Heart right ventricle (tissue), 16 donors: ENCODE measurements at regions of chr22 and their contacts with region 1.

Region 1: DNA sequence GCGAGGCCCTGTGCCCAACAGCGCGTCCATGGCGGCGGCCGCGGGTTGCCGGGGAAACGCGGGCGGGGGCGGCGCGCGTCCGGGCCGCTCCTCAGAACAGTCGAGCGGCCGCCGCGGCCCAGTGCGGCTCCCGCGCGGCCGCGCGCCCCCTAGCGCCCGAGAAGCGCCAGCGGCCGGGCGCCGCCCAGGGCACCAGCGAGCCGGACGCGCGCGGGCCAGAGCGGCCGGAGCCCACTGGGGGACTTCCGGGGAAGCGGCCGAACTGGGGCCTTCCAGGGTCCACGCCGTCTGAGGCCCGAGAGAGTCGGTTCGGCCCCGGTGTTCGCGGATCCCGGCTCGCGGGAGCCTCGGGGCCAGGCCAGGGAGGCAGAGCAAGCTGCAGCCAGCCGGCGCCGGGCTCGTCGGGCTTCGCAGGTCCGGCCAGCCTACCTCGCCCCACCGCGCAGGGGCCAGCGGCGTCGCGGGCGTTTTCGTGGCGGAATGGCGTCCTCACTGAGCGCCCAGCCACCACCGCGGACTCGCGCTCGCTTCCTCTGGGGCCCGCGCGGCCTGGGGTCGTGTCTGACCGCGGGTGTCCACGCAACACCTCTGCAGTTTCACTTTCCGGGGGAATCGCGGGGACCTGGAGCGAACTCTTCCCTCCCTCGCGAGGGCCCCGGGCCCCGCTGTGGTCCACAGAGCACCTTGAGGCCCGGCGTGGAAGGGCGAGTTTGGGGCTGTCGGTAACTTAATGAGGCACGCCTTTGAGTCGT is at the start of gene DENND6B:
- DNase-seq: peak; percentile 73 to 85
- ATAC-seq: peak; percentile 92 to 99 (median 95)
- H3K4me3 ChIP-seq: peak within 1 kb of the TSS; percentile 44 to 98 (median 80)
- H3K27ac ChIP-seq: peak within 1 kb of the TSS; percentile 89 to 100 (median 96)
- H3K4me1 ChIP-seq: peaks cover 0 to 20% (median 14%) of the 10 kb centered on the region in 9 donors
- H3K27me3 ChIP-seq: no peaks in the 10 kb centered on the region
- CTCF ChIP-seq: peak; percentile 33 to 87 (median 59)
- total RNA-seq, gene DENND6B: 1.1 to 3.6 (median 2.0) TPM

Region 2: DNA sequence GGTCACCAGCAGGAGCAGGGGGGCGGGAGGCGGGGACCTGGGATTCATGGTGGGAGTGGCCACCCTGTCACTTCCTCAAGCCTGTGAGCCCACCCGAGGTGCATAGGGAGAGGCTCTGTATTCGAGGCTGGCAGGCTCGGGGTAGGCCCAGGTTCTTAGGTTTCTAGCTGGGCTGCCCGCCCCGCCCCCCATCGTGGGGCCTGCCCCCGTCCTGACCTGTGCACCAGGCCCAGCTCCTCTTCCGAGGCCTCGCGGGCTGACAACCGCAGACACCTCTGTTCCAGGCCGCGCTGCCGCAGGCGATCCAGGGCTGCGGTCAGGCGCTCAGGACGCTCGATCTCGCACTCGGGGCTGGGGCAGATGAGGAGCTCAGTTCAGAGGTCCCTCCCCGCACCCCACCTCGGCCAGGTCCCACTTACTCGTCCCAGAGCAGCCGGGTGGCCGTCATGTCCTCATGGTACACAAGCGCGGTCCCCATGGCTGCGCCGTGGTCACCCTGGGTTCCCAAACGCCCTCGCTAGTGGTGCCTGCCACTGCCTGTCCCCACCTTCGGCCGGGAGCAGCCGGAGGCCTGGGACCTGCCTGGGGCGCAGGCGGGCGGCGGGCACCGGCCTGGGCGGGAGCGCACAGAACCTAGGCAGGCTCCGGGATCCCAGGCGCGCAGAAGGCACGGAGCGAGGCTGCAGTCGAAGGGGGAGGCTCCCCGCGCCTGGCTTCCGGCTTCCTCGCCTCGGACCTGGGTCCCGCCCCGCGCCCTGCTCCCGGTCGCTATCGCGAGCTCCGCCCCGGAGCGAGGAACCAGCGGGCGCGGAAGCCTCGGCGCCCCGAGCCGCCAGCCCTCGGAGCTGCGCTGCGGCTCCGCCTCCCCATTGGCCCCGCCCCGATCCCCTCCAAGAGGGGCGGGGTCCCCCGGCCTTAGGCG is 76.3 kb before region 1 on chr22 and contains the start of gene HDAC10:
- intact Hi-C with region 1: loop called in 3 of 10 experiments (anchors 5 kb)
- DNase-seq: peak; percentile 69 to 85
- ATAC-seq: peak; percentile 64 to 86 (median 74)
- H3K4me3 ChIP-seq: peak within 1 kb of the TSS; percentile 52 to 94 (median 77)
- H3K27ac ChIP-seq: peak within 1 kb of the TSS; percentile 19 to 85 (median 72)
- H3K4me1 ChIP-seq: peaks cover 13 to 48% (median 33%) of the 10 kb centered on the region in 9 donors
- H3K27me3 ChIP-seq: no peaks in the 10 kb centered on the region
- CTCF ChIP-seq: no peak
- total RNA-seq, gene HDAC10: 7.1 to 16.7 (median 10.3) TPM

Region 3: DNA sequence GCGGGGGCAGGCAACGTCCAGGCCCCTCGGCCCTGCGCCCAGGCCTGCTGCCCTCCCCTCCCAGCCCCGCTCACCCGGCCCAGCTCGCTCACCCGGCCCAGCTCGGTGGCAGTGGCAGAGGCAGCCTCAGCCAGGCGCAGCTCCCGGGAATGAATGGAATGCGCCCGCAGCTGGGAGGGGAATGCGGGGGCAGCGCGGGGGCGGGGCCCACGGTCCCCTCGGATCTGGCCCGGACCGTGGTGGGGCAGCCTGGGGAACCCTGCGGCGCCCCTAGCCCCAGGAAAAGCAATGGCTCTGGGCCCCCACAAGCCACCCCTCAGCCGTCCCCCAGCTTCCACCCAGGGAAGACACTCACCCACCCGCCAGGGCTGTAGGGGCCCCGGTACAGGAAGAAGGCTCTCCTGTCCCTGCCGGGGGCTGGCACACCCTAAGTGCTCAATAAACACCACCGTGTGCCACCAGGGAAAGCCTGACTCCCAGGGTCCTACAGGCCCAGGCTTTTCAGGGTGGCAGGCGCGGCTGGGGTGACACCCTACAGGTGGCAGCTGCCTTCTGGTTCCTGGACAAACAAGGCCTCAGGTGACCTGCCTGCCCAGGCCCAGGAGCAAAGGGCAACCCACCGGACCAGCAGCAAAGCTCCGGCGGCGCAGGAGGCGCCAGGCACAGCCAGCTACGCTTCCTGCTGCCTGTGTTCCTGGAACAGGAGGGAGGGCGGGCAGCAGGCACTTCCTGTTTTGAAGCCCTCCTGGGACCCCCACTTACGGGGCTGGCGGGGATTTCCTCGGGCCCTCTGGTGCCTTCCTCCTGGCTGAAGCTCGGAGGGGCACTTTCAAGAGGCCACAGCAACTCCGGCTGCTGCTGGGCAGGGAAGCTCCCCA is 33.5 kb before region 1 on chr22:
- intact Hi-C with region 1: loop called in 3 of 10 experiments (anchors 5 kb)
- DNase-seq: peak; percentile 71 to 75
- ATAC-seq: peak; percentile 75 to 91 (median 82)
- H3K4me3 ChIP-seq: peak overlapping the region in 9 of 10 donors; percentile 3 to 44 (median 35)
- H3K27ac ChIP-seq: peak overlapping the region; percentile 39 to 96 (median 90)
- H3K4me1 ChIP-seq: peaks cover 37 to 69% (median 53%) of the 10 kb centered on the region in 9 donors
- H3K27me3 ChIP-seq: peaks cover 0 to 10% (median 0%) of the 10 kb centered on the region in 7 donors
- CTCF ChIP-seq: no peak

Region 4: DNA sequence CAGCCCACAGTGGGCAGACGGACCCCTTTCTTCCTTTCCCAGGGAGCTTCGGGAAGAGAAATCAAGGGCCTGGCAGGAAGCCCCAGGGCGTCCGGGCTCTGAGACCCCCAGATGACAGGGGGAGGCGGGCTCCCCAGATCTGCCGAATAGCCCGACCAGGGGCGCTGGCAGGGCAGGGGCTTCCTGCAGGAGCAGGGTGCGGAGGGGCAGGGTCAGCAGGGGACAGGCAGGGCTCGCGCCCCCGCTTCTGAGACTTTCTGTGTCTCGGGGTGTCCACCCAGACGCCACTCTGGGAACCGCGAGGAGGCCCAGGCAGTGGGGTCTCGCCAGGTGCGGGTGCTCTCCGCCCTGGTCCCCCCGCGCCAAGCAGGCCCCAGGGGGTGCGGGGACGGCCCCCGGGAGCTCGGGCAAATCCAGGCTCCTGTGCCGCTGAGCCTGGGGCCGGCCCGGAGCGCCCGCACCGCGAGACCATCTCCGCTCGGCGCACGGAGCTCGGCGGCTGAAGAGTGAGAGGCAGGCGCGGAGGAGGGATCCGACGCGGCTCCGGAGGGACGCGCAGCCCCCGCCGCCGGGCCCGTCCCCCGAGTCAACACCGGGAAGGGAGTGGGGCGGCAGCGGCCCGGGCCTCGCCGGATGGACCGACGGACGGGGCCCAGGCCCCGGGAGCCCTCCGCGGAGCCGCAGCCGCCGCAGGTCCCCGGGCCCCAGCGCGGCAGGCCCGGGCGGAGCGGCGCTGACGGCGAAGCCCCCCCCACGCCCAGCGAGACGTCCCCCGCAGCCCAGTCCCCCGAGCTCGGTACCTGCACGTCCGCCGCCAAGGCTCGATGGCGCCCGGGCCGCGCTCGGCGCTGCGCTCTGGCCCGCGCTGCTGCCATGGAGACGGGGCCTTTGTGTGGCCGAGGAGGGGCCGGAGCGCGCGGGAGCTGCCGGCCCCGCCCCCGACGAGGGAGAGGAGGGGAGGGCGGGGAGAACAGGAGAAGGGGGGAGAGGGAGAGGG is 20.1 kb before region 1 on chr22 and contains the start of gene PLXNB2:
- intact Hi-C with region 1: loop called in 2 of 10 experiments (anchors 2 kb)
- DNase-seq: peak; percentile 87 to 88
- ATAC-seq: peak; percentile 36 to 76 (median 62)
- H3K4me3 ChIP-seq: peak within 1 kb of the TSS; percentile 85 to 98 (median 94)
- H3K27ac ChIP-seq: peak within 1 kb of the TSS; percentile 91 to 98 (median 94)
- H3K4me1 ChIP-seq: peaks cover 43 to 66% (median 64%) of the 10 kb centered on the region in 9 donors
- H3K27me3 ChIP-seq: peaks cover 0 to 4% (median 0%) of the 10 kb centered on the region in 7 donors
- CTCF ChIP-seq: no peak
- total RNA-seq, gene PLXNB2: 43.0 to 101 (median 57.8) TPM